ENCODE measurements at regions of chr9 and their contacts with region 1.

Region 1: GRCh38 chr9:122125158-122125508 is 32.0 kb upstream of the TTLL11 start:
- DNase-seq: peak; percentile 85
- H3K4me3 Mint-ChIP-seq: no peak overlapping the region
- H3K27ac Mint-ChIP-seq: no peak overlapping the region
- H3K4me1 Mint-ChIP-seq: peaks cover 18% of the 10 kb centered on the region
- H3K27me3 Mint-ChIP-seq: peaks cover 35% of the 10 kb centered on the region

Region 2: DNA sequence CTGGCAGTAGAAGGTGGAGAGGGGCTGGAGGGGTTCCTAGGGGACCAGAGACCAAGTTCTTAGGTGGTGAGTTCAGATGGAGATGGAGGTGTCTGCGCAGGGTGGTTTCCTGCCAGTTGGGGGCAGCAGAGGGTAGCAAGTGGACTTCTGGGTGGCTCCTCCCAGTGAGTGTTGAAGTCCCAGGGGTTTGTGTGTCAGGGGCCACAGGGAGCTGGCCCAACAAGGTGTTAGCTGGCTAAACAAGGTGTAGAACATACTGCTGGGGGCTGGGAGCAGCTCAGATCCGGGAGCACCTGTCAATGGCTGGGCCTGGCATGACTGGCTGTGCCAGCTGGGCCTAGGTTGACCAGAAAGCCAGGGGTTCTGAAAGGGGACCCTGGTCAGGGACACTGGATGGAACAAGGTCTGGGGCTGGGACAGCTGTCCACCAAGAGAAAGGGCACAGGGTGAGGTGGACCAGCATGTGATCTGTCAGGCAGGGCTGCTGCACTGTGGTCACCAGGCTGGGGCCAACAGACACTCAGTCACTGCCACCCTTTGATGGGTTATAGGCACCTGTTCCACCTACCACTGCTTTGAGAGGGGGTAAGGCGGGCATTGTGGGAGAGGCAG is 438.1 kb before region 1 on chr9:
- CTCF ChIA-PET with region 1: interaction called, 4 read pairs
- POLR2A ChIA-PET with region 1: no interaction called
- intact Hi-C with region 1: loop called (anchors 2 kb)
- DNase-seq: peak; percentile 80
- H3K4me3 Mint-ChIP-seq: no peak overlapping the region
- H3K27ac Mint-ChIP-seq: no peak overlapping the region
- H3K4me1 Mint-ChIP-seq: no peaks in the 10 kb centered on the region
- H3K27me3 Mint-ChIP-seq: peaks cover 11% of the 10 kb centered on the region

Region 3: DNA sequence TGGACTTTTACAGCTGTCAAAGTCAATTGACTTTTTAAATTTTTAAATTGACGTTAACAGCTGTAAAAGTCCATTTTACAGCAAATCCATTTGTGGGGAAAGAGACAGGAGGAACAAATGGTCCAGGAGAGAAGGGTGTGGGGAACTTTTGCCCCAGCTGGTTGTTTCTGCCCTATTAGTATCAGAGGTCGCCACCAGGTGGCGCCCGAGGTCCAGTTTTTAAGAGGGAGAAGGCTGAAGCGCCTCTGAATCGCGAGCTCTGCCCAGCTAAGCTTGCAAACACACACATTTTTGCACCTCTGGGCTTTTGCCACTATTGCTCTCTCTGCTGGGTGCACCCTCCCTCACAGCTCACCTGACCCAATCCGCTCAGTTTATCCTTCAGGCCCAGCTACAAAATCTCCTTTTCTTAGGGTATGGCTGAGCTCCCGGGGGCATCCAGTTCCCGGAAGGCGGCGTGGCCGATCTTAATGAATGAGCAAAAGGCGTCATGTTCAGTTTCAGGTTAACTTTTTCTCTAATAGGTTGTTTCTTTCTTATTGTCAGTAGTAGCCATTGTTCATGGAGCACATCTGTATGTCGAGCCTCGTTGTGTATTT is 25.8 kb before region 1 on chr9:
- CTCF ChIA-PET with region 1: interaction called, 365 read pairs
- POLR2A ChIA-PET with region 1: interaction called, 4 read pairs
- intact Hi-C with region 1: loop called (anchors 1 kb)
- DNase-seq: peak; percentile 83
- H3K4me3 Mint-ChIP-seq: peak overlapping the region; percentile 58
- H3K27ac Mint-ChIP-seq: no peak overlapping the region
- H3K4me1 Mint-ChIP-seq: peaks cover 12% of the 10 kb centered on the region
- H3K27me3 Mint-ChIP-seq: peaks cover 8% of the 10 kb centered on the region

Region 4: DNA sequence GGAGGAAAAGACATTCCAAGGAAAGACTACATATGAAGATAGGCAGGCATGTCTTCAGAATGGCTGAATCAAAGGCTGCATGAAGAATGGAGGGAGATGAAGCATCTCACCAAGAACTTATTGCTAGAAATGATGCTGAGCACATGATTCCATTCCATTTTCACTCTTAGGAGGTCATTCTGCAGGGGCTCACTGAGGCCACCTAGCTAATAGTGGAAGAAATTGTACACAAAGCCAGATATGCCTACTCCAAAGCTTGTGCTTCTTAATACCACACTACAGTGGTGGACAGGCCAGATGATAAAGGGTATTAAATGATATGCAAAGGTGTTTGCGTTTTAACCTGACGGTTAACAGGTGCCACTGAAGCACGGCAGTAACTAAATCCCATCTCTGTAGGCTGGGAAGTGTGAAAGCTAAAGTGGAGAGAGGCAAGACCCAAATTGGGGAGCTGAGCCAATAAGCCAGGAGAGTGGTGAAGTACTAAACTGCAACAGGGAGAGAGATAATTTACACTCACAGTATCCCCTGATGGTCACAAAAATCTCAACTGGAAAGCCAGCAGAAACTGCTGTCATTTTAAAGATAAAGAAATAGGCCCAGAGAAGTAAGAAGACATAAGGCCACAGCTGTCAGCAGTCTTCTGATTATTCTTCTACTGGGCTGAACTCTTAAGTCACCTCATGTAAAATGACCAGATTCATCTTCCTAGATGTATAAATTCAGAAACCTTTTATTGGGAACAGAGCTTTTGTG is 19.9 kb after region 1 on chr9:
- CTCF ChIA-PET with region 1: interaction called, 17 read pairs
- POLR2A ChIA-PET with region 1: no interaction called
- intact Hi-C with region 1: no loop called
- DNase-seq: no peak
- H3K4me3 Mint-ChIP-seq: no peak overlapping the region
- H3K27ac Mint-ChIP-seq: no peak overlapping the region
- H3K4me1 Mint-ChIP-seq: no peaks in the 10 kb centered on the region
- H3K27me3 Mint-ChIP-seq: no peaks in the 10 kb centered on the region

Region 5: DNA sequence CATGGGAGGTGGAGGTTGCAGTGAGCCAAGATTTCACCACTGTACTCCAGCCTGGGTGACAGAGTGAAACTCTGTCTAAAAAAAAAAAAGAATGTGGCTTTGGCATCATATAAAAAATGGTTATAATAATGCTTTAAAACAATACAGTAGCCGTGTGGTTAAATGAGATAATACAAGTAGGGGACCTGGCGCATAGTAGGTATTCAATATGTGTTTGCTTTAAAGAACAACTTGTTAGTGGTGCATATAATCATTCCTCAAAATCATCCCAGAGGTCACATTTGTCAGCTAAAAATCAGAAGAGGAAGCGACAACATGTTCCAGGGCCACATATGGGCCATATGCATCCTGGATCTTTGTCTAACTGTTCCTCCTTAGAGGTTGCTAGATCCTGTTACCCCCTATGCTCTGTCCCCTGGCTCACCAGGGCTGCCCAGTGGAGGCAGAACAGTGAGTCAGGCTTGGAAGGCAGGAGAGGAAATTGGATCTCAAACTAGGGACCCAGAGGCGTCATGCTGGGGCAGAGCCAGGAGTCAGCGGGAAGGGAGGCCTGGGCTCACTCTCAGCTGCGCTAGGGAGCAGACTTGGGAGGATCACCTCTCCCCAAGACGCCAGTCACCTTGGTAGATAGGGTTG is 75.9 kb after region 1 on chr9:
- CTCF ChIA-PET with region 1: no interaction called
- POLR2A ChIA-PET with region 1: no interaction called
- intact Hi-C with region 1: no loop called
- DNase-seq: no peak
- H3K4me3 Mint-ChIP-seq: no peak overlapping the region
- H3K27ac Mint-ChIP-seq: no peak overlapping the region
- H3K4me1 Mint-ChIP-seq: no peaks in the 10 kb centered on the region
- H3K27me3 Mint-ChIP-seq: peaks cover 9% of the 10 kb centered on the region

Region 6: DNA sequence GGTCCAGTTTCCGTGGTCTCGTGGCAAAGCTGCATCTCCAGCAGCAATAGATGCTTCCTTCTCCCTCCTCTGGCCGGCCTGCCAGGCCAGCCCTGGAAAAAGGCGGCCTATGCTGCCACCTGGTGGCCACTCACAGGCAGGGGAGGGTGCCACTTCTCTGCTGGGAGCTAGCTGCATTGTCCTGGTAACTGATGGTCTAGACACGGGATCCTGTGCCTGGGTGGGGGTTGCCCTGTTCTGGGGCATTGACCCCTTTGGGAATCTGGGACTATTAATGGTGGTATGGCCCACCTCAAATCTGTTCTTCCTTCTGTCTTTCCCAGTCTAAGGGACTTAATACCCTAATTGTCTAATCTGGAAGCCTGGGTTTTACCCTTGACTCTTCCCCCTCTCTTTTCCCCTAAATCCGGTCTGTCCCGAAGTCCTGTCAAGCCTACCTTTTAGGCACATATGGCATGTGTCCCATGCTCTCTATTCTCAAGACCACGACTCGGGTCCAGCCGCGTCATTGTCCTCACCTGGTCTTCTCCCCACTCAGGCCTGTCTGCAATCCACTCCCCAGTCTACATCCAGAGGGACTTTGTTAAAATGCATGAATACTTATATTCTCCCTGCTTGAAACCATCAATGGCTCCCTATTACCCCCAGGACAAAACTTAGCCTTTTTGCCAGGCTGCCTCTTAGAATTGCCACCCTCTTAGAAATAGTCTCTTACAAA is 225.7 kb after region 1 on chr9:
- CTCF ChIA-PET with region 1: interaction called, 314 read pairs
- POLR2A ChIA-PET with region 1: no interaction called
- intact Hi-C with region 1: loop called (anchors 1 kb)
- DNase-seq: peak; percentile 85
- H3K4me3 Mint-ChIP-seq: no peak overlapping the region
- H3K27ac Mint-ChIP-seq: no peak overlapping the region
- H3K4me1 Mint-ChIP-seq: peaks cover 4% of the 10 kb centered on the region
- H3K27me3 Mint-ChIP-seq: peaks cover 32% of the 10 kb centered on the region

Measured in activated CD4-positive, alpha-beta memory T cell treated with anti-CD3 and anti-CD28 coated beads for 36 hours (primary cell).